Posterior vena cava (tissue), 2 donors: ENCODE measurements at regions of chr20 and their contacts with region 1.

Region 1: DNA sequence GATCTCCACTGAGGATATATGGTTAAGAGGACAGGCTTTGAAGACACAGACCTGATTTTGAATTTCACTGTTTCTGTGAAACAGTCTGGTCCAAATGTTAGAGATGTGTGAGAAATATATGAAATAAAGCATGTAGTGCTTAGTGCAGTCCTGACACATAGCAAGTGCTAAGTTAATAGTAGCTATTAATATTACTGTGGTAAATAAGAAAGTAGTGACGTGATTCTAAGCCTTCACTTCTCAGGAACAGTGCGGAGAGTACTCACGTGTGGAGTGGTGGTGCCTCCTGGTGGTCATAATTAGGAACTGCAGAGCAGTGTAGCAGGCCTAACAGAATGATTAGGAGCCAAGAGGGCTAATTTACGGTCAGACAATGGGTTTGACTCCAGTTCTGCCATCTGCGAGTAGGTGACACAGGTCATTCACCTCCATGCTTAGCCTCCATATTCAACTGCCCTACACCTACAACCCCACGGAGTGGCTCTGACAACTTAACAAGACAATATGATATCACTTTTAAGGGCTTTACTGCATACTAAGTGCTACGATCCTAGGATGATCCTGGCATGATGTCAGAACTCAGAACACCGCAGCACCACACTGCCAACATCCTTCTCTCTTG is 106.2 kb downstream of the JPH2 start:
- DNase-seq: peak; percentile 88

Region 2: DNA sequence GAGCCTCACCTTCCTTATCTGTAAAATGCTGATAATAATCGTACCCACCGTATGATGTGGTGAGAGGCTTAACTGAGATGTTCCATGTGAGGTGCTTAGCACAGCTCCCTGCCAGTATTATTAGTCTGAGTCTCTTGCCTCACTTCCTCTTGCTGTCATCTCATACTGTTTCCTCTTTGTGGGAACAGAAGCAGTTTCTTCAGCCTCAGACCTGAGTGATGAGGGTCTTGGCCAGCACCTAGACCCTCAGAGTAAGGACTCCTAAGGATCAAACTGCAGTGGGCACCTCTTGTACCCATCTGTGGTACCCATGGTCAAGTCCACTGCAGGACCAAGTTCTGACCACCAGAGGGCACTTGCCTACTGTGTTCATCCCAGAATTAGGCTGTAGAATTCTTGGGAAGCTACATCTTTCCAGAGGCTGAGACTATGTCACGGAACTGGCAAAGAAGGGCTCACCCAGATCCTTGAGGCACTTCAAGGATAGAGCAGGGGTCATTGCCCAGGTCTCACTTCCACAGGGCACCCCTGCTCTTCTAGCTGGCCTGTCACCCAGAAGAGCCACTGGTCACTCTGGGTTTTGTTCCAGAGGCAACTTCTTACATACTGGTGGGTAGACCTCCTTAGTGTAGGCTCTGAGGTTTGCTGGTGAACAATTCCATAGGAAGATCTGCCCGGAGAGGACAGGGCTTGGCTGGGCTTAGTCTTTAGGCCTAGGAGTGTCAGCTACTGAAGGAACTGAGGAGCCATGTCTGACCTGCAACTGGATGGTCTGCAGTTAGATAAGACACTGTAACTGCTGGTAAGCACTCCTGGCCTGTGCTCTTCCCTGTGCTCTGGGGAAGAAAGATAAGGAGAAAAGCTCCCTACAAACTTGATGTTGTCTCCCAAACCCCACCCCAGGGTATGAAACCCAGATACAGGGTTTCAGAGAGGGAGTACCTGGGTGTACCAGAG is 542.6 kb before region 1 on chr20:
- intact Hi-C with region 1: loop called (anchors 10 kb)
- DNase-seq: peak; percentile 86

Region 3: GRCh38 chr20:43749734-43750294 is 330.9 kb before region 1 on chr20:
- intact Hi-C with region 1: loop called (anchors 1 to 5 kb)
- DNase-seq: peak; percentile 95

Region 4: GRCh38 chr20:44516491-44516890 is 435.7 kb after region 1 on chr20:
- intact Hi-C with region 1: no loop called
- DNase-seq: no peak